Endothelial cell of umbilical vein (primary cell): ENCODE measurements at regions of chr10 and their contacts with region 1.

Region 1: GRCh38 chr10:8053446-8054290 is 820 bp upstream of the GATA3 start:
- DNase-seq: peak; percentile 87
- H3K4me3 ChIP-seq: peak overlapping the region; percentile 9 to 95 (median 72)
- H3K27ac ChIP-seq: peak overlapping the region; percentile 96
- H3K4me1 ChIP-seq: peaks cover 29% of the 10 kb centered on the region
- H3K27me3 ChIP-seq: no peaks in the 10 kb centered on the region
- CTCF ChIP-seq: peak; percentile 71 to 95
- POLR2A ChIP-seq: peak; percentile 53

Region 2: GRCh38 chr10:7787857-7788638 is 265.6 kb before region 1 on chr10 and contains the starts of genes ATP5F1C and KIN:
- CTCF ChIA-PET with region 1: interaction called, 3 read pairs
- POLR2A ChIA-PET with region 1: no interaction called
- dilution Hi-C with region 1: no loop called
- intact Hi-C with region 1: loop called (anchors 1 kb)
- DNase-seq: peak; percentile 98
- H3K4me3 ChIP-seq: peak within 1 kb of the TSS; percentile 71 to 95 (median 81)
- H3K27ac ChIP-seq: peak within 1 kb of the TSS; percentile 53
- H3K4me1 ChIP-seq: peaks cover 18% of the 10 kb centered on the region
- H3K27me3 ChIP-seq: no peaks in the 10 kb centered on the region
- CTCF ChIP-seq: no peak
- POLR2A ChIP-seq: peak; percentile 88
- total RNA-seq, gene ATP5F1C: 275 and 290 TPM in 2 replicates
- total RNA-seq, gene KIN: 13.6 and 14.4 TPM in 2 replicates

Region 3: DNA sequence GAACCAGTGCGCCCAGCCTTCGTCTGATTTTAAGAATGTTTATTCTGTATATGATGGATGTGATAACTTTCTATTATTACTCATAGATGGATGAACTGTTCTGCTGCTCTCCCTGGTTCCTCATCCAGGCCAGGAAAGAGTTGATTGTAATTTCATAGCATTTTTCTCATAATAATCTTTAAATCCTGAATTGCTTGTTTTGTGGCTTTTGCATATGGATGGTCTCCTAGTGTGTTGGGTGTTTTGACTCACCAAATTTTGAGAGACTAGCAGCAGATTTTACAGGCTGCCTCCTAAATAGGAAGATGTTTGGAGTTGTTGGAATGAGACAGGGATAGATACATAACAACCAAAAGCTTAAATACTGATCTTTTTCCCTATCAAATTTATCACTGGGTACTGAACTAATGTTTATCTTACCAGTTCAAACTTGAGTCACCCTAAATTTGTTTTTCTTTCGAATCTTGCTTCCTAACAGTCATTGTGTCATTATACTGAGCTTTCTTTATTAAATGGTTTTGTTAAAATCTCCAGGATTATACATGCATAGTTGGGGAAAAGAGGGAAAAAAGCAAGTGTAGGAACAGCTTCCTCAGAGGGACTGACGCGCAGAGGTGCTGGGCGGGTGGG is 105.2 kb before region 1 on chr10:
- CTCF ChIA-PET with region 1: no interaction called
- POLR2A ChIA-PET with region 1: no interaction called
- dilution Hi-C with region 1: no loop called
- intact Hi-C with region 1: loop called (anchors 2 kb)
- DNase-seq: peak; percentile 72
- H3K4me3 ChIP-seq: peak overlapping the region in 1 of 3 experiments; percentile 40
- H3K27ac ChIP-seq: peak overlapping the region; percentile 78
- H3K4me1 ChIP-seq: peaks cover 26% of the 10 kb centered on the region
- H3K27me3 ChIP-seq: no peaks in the 10 kb centered on the region
- CTCF ChIP-seq: no peak
- POLR2A ChIP-seq: no peak

Region 4: DNA sequence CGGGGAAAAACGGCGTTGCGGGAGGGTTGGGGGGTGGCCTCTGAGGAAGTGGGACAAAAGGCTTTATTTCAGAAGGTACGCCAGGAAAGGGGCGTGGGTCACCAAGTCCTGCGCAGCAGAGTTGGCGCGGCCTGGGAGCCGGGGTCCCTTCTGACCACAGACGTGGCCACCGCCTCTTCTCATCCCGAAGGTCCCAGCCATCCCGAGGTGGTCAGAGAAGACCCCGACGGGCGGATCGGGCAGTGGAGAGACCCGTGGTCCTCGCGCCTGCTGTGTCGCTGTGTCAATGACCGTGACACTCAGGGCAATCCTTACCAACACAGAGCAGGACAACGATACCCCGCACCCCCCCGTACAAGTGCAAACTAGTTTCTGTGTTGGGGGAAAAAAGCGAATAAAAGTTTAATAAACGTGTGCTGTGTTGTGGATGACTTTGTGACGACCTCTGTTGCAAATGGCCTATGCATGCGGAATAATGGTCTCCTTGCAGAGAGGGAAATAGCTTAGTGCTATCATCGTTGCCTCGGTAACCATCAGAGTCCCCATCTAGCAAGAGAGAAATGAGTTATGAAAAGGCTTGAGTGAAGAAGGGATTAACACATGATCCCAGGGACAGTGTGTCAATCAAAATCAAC is 18.5 kb before region 1 on chr10:
- CTCF ChIA-PET with region 1: no interaction called
- POLR2A ChIA-PET with region 1: no interaction called
- dilution Hi-C with region 1: no loop called
- intact Hi-C with region 1: no loop called
- DNase-seq: no peak
- H3K4me3 ChIP-seq: no peak overlapping the region
- H3K27ac ChIP-seq: no peak overlapping the region
- H3K4me1 ChIP-seq: peaks cover 27% of the 10 kb centered on the region
- H3K27me3 ChIP-seq: peaks cover 31 to 38% of the 10 kb centered on the region in 2 experiments
- CTCF ChIP-seq: no peak
- POLR2A ChIP-seq: no peak

Region 5: DNA sequence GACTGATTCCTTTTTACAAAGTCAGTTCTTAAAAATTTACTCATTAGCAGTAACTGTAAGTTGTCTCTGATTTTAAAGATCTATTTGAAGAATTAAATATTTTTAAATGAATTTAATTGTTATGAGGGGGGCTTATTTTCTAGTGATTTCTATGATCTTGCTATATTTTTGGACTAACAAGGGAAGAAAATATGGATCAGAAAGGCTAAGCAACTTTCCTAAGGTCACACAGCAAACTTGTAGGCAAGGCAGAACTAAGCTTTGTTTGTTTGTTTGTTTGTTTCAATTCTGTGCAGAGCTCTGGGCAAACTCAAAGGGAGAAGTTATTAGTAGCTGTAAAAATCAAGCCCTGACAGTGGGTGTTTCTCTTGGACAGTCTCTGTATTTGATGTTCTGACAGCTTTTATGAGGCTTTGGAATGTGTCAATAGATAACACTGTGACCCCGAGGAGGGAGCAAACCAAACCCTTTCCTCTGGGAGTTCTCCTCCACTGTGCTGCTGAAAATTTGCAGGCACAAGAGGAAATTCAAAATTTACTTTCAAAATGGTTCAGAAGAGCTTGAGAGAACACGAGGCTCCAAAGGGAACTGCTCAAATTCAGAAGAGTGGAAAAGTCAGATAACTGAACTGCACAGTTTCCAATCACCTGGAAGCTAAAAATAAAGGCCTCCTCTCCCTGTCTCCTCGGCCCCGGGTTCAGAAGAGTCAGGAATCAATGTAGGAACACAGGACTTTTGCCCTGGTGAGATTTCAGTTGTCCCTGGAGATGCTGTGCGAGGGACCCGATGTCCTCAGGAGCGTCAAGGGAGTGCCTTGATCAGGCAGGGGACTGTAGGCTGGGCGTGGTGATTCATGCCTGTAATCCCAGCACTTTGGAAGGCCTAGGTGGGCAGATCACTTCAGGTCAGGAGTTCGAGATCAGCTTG is 326.5 kb after region 1 on chr10:
- CTCF ChIA-PET with region 1: no interaction called
- POLR2A ChIA-PET with region 1: no interaction called
- dilution Hi-C with region 1: no loop called
- intact Hi-C with region 1: loop called (anchors 5 kb)
- DNase-seq: peak; percentile 4
- H3K4me3 ChIP-seq: no peak overlapping the region
- H3K27ac ChIP-seq: no peak overlapping the region
- H3K4me1 ChIP-seq: peaks cover 30% of the 10 kb centered on the region
- H3K27me3 ChIP-seq: no peaks in the 10 kb centered on the region
- CTCF ChIP-seq: no peak
- POLR2A ChIP-seq: no peak

Region 6: GRCh38 chr10:8873310-8873709 is 819.6 kb after region 1 on chr10:
- CTCF ChIA-PET with region 1: no interaction called
- POLR2A ChIA-PET with region 1: no interaction called
- dilution Hi-C with region 1: no loop called
- intact Hi-C with region 1: loop called (anchors 1 kb)
- DNase-seq: peak; percentile 22
- H3K4me3 ChIP-seq: no peak overlapping the region
- H3K27ac ChIP-seq: no peak overlapping the region
- H3K4me1 ChIP-seq: no peaks in the 10 kb centered on the region
- H3K27me3 ChIP-seq: no peaks in the 10 kb centered on the region
- CTCF ChIP-seq: no peak
- POLR2A ChIP-seq: no peak

Region 7: GRCh38 chr10:9209105-9209798 is 1155.6 kb after region 1 on chr10:
- CTCF ChIA-PET with region 1: interaction called, 9 read pairs
- POLR2A ChIA-PET with region 1: no interaction called
- dilution Hi-C with region 1: no loop called
- intact Hi-C with region 1: loop called (anchors 1 kb)
- DNase-seq: peak; percentile 82
- H3K4me3 ChIP-seq: no peak overlapping the region
- H3K27ac ChIP-seq: no peak overlapping the region
- H3K4me1 ChIP-seq: peaks cover 2% of the 10 kb centered on the region
- H3K27me3 ChIP-seq: no peaks in the 10 kb centered on the region
- CTCF ChIP-seq: peak; percentile 79 to 84
- POLR2A ChIP-seq: no peak